ENCODE measurements at regions of chr22 and their contacts with region 1.

Region 1: GRCh38 chr22:28237112-28237511 is 318.1 kb upstream of the PITPNB start:
- DNase-seq: no peak
- H3K4me3 ChIP-seq: no peak overlapping the region
- H3K27ac ChIP-seq: no peak overlapping the region
- H3K4me1 ChIP-seq: no peaks in the 10 kb centered on the region
- H3K27me3 ChIP-seq: no peaks in the 10 kb centered on the region
- CTCF ChIP-seq: no peak
- EP300 ChIP-seq: no peak
- POLR2A ChIP-seq: no peak

Region 2: DNA sequence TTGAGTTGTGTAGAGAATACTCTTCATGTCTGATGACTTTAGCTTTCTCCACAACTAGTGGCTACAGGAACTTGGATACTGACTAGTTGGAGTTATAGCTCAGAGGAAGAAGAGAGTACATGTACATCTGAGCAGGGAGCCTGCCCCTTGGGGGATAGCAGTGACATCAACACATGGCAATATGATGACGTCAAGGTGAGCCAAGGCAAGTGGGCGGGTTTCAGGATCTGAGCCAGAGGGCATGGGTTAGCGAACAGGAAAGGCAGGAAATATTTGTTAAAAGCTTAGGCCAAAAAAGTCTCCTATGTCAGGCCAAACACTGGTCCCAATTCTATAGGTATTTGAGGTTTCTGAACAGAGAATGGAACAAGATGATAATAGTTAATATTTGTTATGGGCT is 1801.1 kb after region 1 on chr22:
- intact Hi-C with region 1: loop called in 1 of 4 experiments (anchors 5 kb)
- DNase-seq: no peak
- H3K4me3 ChIP-seq: no peak overlapping the region
- H3K27ac ChIP-seq: no peak overlapping the region
- H3K4me1 ChIP-seq: no peaks in the 10 kb centered on the region
- H3K27me3 ChIP-seq: no peaks in the 10 kb centered on the region
- CTCF ChIP-seq: no peak
- EP300 ChIP-seq: no peak
- POLR2A ChIP-seq: no peak